ENCODE measurements at regions of chr10 and their contacts with region 1.

Region 1: GRCh38 chr10:59124187-59124586 is 52.3 kb upstream of the PHYHIPL start:
- DNase-seq: no peak
- ATAC-seq: no peak
- H3K4me3 ChIP-seq: no peak overlapping the region
- H3K27ac ChIP-seq: no peak overlapping the region
- H3K4me1 ChIP-seq: no peaks in the 10 kb centered on the region
- H3K27me3 ChIP-seq: peaks cover 46% of the 10 kb centered on the region
- CTCF ChIP-seq: no peak

Region 2: GRCh38 chr10:58701405-58702135 is 422.6 kb before region 1 on chr10:
- CTCF ChIA-PET with region 1: no interaction called
- POLR2A ChIA-PET with region 1: no interaction called
- intact Hi-C with region 1: no loop called
- DNase-seq: peak; percentile 45
- ATAC-seq: no peak
- H3K4me3 ChIP-seq: no peak overlapping the region
- H3K27ac ChIP-seq: no peak overlapping the region
- H3K4me1 ChIP-seq: peaks cover 16% of the 10 kb centered on the region
- H3K27me3 ChIP-seq: peaks cover 15% of the 10 kb centered on the region; the same call in 1 of the 2 replicates
- CTCF ChIP-seq: no peak

Region 3: GRCh38 chr10:59060852-59061251 is 63.3 kb before region 1 on chr10:
- CTCF ChIA-PET with region 1: no interaction called
- POLR2A ChIA-PET with region 1: no interaction called
- intact Hi-C with region 1: no loop called
- DNase-seq: no peak
- ATAC-seq: no peak
- H3K4me3 ChIP-seq: no peak overlapping the region
- H3K27ac ChIP-seq: no peak overlapping the region
- H3K4me1 ChIP-seq: no peaks in the 10 kb centered on the region
- H3K27me3 ChIP-seq: peaks cover 71% of the 10 kb centered on the region
- CTCF ChIP-seq: no peak

Region 4: GRCh38 chr10:59090817-59091622 is 33.2 kb before region 1 on chr10:
- CTCF ChIA-PET with region 1: no interaction called
- POLR2A ChIA-PET with region 1: interaction called, 11 read pairs
- intact Hi-C with region 1: no loop called
- DNase-seq: no peak
- ATAC-seq: no peak
- H3K4me3 ChIP-seq: no peak overlapping the region
- H3K27ac ChIP-seq: no peak overlapping the region
- H3K4me1 ChIP-seq: no peaks in the 10 kb centered on the region
- H3K27me3 ChIP-seq: peaks cover 81% of the 10 kb centered on the region
- CTCF ChIP-seq: no peak

Region 5: GRCh38 chr10:59315465-59315864 is 191.3 kb after region 1 on chr10:
- CTCF ChIA-PET with region 1: no interaction called
- POLR2A ChIA-PET with region 1: no interaction called
- intact Hi-C with region 1: no loop called
- DNase-seq: no peak
- ATAC-seq: no peak
- H3K4me3 ChIP-seq: no peak overlapping the region
- H3K27ac ChIP-seq: no peak overlapping the region
- H3K4me1 ChIP-seq: no peaks in the 10 kb centered on the region
- H3K27me3 ChIP-seq: peaks cover 32% of the 10 kb centered on the region
- CTCF ChIP-seq: no peak